CD14-positive monocyte (primary cell): ENCODE measurements at regions of chrX and their contacts with region 1.

Region 1: DNA sequence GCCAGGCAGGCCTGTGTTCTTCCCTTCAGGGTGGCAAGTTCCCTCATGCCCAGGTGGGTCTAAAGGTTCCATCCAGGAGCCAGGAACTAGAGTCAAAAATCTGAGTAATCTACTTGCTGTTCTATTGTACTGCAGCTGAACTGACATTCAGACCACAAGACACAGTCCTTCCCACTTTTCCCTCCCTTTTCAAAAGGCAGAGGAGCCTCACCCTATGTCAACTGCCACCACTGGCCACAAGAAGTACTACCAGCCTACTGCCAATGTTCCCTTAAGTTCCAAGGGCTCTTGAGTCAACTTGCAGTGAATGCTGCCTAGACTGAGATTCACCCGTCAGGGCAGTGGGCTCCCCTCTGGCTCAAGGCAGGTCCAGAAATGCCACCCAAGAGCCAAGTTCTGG is 133.5 kb downstream of the FAM47B start:
- DNase-seq: no peak
- H3K4me3 ChIP-seq: no peak overlapping the region
- H3K4me3 Mint-ChIP-seq: no peak overlapping the region
- H3K27ac ChIP-seq: no peak overlapping the region
- H3K27ac Mint-ChIP-seq: no peak overlapping the region
- H3K4me1 ChIP-seq: no peaks in the 10 kb centered on the region
- H3K4me1 Mint-ChIP-seq: no peaks in the 10 kb centered on the region
- H3K27me3 ChIP-seq: no peaks in the 10 kb centered on the region
- H3K27me3 Mint-ChIP-seq: no peaks in the 10 kb centered on the region
- CTCF ChIP-seq: no peak

Region 2: GRCh38 chrX:35006361-35006760 is 69.7 kb before region 1 on chrX:
- intact Hi-C with region 1: no loop called
- DNase-seq: no peak
- H3K4me3 ChIP-seq: no peak overlapping the region
- H3K4me3 Mint-ChIP-seq: no peak overlapping the region
- H3K27ac ChIP-seq: no peak overlapping the region
- H3K27ac Mint-ChIP-seq: no peak overlapping the region
- H3K4me1 ChIP-seq: no peaks in the 10 kb centered on the region
- H3K4me1 Mint-ChIP-seq: no peaks in the 10 kb centered on the region
- H3K27me3 ChIP-seq: no peaks in the 10 kb centered on the region
- H3K27me3 Mint-ChIP-seq: no peaks in the 10 kb centered on the region
- CTCF ChIP-seq: no peak

Region 3: GRCh38 chrX:35023683-35024082 is 52.4 kb before region 1 on chrX:
- intact Hi-C with region 1: loop called in 1 of 2 experiments (anchors 10 kb)
- DNase-seq: no peak
- H3K4me3 ChIP-seq: no peak overlapping the region
- H3K4me3 Mint-ChIP-seq: no peak overlapping the region
- H3K27ac ChIP-seq: no peak overlapping the region
- H3K27ac Mint-ChIP-seq: no peak overlapping the region
- H3K4me1 ChIP-seq: no peaks in the 10 kb centered on the region
- H3K4me1 Mint-ChIP-seq: no peaks in the 10 kb centered on the region
- H3K27me3 ChIP-seq: no peaks in the 10 kb centered on the region
- H3K27me3 Mint-ChIP-seq: no peaks in the 10 kb centered on the region
- CTCF ChIP-seq: no peak